Activated CD4-positive, alpha-beta T cell treated with anti-CD3 and anti-CD28 coated beads for 36 hours (primary cell): ENCODE measurements at regions of chr6 and their contacts with region 1.

Region 1: GRCh38 chr6:111259089-111259831 is 172.0 kb downstream of the SLC16A10 start:
- DNase-seq: peak; percentile 99
- ATAC-seq: peak; percentile 96
- H3K4me3 Mint-ChIP-seq: peak overlapping the region; percentile 78
- H3K27ac Mint-ChIP-seq: peak overlapping the region; percentile 56
- H3K4me1 Mint-ChIP-seq: peaks cover 30% of the 10 kb centered on the region
- H3K27me3 Mint-ChIP-seq: no peaks in the 10 kb centered on the region

Region 2: GRCh38 chr6:110815217-110816109 is 443.8 kb before region 1 on chr6 and contains the start of gene CDK19:
- CTCF ChIA-PET with region 1: no interaction called
- POLR2A ChIA-PET with region 1: no interaction called
- intact Hi-C with region 1: loop called in 1 of 2 experiments (anchors 1 kb)
- DNase-seq: peak; percentile 99
- ATAC-seq: peak; percentile 85
- H3K4me3 Mint-ChIP-seq: peak within 1 kb of the TSS; percentile 88
- H3K27ac Mint-ChIP-seq: peak within 1 kb of the TSS; percentile 98
- H3K4me1 Mint-ChIP-seq: peaks cover 32% of the 10 kb centered on the region
- H3K27me3 Mint-ChIP-seq: no peaks in the 10 kb centered on the region
- total RNA-seq, gene CDK19: 14.7 to 15.7 TPM

Region 3: GRCh38 chr6:110981202-110981600 is 278.1 kb before region 1 on chr6:
- CTCF ChIA-PET with region 1: no interaction called
- POLR2A ChIA-PET with region 1: no interaction called
- intact Hi-C with region 1: loop called in 1 of 2 experiments (anchors 1 kb)
- DNase-seq: no peak
- ATAC-seq: no peak
- H3K4me3 Mint-ChIP-seq: peak overlapping the region; percentile 99
- H3K27ac Mint-ChIP-seq: peak overlapping the region; percentile 97
- H3K4me1 Mint-ChIP-seq: peaks cover 31% of the 10 kb centered on the region
- H3K27me3 Mint-ChIP-seq: no peaks in the 10 kb centered on the region

Region 4: GRCh38 chr6:111338843-111339242 is 79.6 kb after region 1 on chr6:
- CTCF ChIA-PET with region 1: interaction called, 5 read pairs
- POLR2A ChIA-PET with region 1: no interaction called
- intact Hi-C with region 1: loop called in 1 of 2 experiments (anchors 1 kb)
- DNase-seq: no peak
- ATAC-seq: peak; percentile 90
- H3K4me3 Mint-ChIP-seq: no peak overlapping the region
- H3K27ac Mint-ChIP-seq: no peak overlapping the region
- H3K4me1 Mint-ChIP-seq: peaks cover 20% of the 10 kb centered on the region
- H3K27me3 Mint-ChIP-seq: no peaks in the 10 kb centered on the region

Region 5: GRCh38 chr6:111565326-111566221 is 306.3 kb after region 1 on chr6:
- CTCF ChIA-PET with region 1: interaction called, 9 read pairs
- POLR2A ChIA-PET with region 1: no interaction called
- intact Hi-C with region 1: loop called in 1 of 2 experiments (anchors 1 kb)
- DNase-seq: peak; percentile 57
- ATAC-seq: peak; percentile 65
- H3K4me3 Mint-ChIP-seq: no peak overlapping the region
- H3K27ac Mint-ChIP-seq: peak overlapping the region; percentile 88
- H3K4me1 Mint-ChIP-seq: peaks cover 53% of the 10 kb centered on the region
- H3K27me3 Mint-ChIP-seq: no peaks in the 10 kb centered on the region

Region 6: GRCh38 chr6:111642463-111643158 is 383.4 kb after region 1 on chr6:
- CTCF ChIA-PET with region 1: interaction called, 3 read pairs
- POLR2A ChIA-PET with region 1: no interaction called
- intact Hi-C with region 1: loop called (anchors 1 to 10 kb)
- DNase-seq: peak; percentile 67
- ATAC-seq: peak; percentile 80
- H3K4me3 Mint-ChIP-seq: no peak overlapping the region
- H3K27ac Mint-ChIP-seq: no peak overlapping the region
- H3K4me1 Mint-ChIP-seq: no peaks in the 10 kb centered on the region
- H3K27me3 Mint-ChIP-seq: no peaks in the 10 kb centered on the region

Region 7: GRCh38 chr6:112043032-112044007 is 784.1 kb after region 1 on chr6:
- CTCF ChIA-PET with region 1: interaction called, 17 read pairs
- POLR2A ChIA-PET with region 1: no interaction called
- intact Hi-C with region 1: loop called (anchors 1 kb)
- DNase-seq: peak; percentile 96
- ATAC-seq: peak; percentile 91
- H3K4me3 Mint-ChIP-seq: peak overlapping the region; percentile 93
- H3K27ac Mint-ChIP-seq: peak overlapping the region; percentile 98
- H3K4me1 Mint-ChIP-seq: peaks cover 50% of the 10 kb centered on the region
- H3K27me3 Mint-ChIP-seq: no peaks in the 10 kb centered on the region